HEK293T (cell line): ENCODE measurements at regions of chr15 and their contacts with region 1.

Region 1: GRCh38 chr15:98177924-98178592 is 217.6 kb downstream of the ARRDC4 start:
- DNase-seq: peak; percentile 82

Region 2: DNA sequence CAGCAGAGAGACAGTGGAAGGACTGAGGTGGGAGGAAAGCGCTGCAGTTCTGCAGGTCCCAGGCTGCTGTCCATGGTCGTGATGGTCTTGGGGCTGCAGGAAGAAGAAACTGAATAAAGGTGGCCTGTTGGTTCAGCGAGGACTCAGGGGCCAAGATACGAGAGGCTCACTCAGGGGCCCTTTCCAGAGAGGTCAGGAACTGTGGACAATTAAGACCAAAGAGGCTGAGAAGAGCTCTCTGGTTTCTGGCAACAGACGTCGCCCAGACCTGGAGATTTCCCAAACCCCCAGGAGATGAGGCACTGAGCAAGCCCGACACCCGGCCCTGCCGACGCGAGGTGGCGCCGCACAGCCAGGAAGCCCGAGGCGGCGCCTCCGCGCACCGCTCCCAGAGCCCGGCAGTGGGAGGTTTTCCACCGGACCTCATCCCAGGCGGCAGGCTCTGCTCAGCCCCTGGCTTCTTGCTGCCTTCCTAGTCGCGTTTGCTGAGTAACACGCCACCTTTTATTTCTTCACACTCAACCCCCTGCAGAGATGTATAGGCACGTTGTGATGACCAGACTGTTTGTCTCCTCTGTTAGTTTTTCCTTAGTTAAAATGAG is 274.0 kb before region 1 on chr15:
- CTCF ChIA-PET with region 1: interaction called, 36 read pairs
- POLR2A ChIA-PET with region 1: no interaction called
- DNase-seq: peak; percentile 90

Region 3: DNA sequence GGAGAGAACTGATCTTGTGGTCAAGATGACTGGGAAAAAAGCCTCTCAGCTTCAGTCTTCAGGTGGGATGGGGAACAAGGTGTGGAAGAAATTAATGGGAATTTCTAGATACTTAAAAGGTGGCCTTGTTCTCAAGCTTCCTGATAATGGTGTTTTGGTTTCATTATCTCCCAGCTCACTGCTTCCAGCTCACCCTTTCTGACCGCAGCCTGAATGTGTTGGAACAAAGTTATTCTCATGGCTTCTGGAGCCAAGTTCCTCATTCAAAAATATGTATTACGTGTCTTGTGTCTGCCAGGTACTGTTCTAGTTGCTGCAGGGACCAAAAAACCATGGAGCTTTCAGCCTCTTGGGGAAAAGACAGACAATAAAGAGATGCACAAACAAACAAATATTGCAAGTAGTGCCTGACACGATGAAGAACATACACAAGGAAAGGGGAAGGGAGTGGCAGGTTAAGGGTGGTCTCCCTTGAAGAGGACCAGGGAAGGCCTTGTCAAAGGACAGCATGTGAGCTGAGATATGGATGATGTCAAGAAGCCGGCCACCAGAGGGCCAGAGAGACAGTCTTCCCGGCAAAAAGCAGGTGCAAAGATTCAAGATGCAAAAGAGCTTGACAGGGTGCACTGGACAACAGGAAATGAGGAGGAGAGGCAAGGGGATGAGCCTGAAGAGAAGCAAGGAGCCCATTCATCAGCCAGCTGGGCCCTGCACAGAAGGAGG is 182.0 kb before region 1 on chr15:
- CTCF ChIA-PET with region 1: interaction called, 12 read pairs
- POLR2A ChIA-PET with region 1: no interaction called
- DNase-seq: peak; percentile 52

Region 4: GRCh38 chr15:98202256-98202655 is 24.2 kb after region 1 on chr15:
- CTCF ChIA-PET with region 1: no interaction called
- POLR2A ChIA-PET with region 1: no interaction called
- DNase-seq: no peak

Region 5: DNA sequence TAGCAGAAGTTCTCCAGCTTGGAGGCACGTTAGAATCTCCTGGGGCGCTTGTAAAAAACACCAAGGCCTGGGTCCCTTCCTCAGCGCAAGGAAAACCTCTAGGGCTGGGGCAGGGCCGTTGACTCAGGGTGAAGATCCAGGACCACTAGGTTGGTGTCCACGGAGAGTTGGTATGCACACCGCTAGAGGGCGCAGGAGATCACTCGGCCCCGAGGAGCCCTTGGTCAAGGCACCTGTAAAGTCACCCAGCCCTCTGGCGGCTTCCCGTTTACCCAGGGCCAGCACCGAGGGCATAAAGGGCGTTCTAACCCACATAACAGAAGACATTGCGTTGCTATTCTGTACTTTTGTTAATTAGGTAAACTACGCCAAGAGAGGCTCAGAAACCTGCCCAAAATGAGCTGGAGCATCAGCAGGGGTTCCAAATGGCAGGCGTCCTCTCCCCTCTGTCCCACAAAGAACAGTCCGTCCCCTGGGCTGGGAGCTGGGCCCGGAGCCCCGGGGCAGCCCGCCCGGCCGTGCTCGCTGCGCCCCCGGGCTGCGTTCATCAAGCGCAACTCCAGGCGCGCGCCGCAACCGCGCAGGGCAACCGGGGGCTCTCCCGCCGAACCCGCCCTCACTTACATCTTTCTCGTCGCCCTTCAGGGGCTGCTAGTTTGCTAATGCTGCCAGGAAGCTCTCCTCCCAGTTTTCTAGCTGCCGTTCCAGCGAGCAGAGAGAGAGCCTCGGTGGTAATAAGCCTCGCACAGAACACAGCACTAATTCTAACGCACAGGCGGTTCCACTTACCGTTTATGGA is 114.6 kb after region 1 on chr15:
- CTCF ChIA-PET with region 1: interaction called, 10 read pairs
- POLR2A ChIA-PET with region 1: no interaction called
- DNase-seq: peak; percentile 86

Region 6: DNA sequence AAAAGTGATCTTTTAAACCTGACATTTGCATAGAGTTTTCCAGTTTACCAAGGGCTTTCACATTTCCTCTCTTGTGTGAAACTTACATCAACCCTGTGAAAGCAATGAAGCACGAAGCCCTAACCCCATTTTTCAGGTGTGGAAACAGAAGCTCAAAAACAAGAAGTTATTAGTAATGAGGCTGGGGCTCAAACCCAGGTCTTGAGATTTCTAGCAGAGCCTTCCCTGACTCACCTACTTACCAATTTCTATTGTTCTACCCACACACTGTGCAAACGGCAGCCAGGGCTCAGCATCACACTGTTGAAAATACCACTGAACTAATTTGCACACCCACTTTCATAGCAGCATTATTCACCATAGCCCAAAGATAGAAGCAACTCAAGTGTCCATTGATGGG is 352.5 kb after region 1 on chr15:
- CTCF ChIA-PET with region 1: no interaction called
- POLR2A ChIA-PET with region 1: no interaction called
- DNase-seq: no peak